ENCODE measurements at regions of chr12 and their contacts with region 1.

Region 1: DNA sequence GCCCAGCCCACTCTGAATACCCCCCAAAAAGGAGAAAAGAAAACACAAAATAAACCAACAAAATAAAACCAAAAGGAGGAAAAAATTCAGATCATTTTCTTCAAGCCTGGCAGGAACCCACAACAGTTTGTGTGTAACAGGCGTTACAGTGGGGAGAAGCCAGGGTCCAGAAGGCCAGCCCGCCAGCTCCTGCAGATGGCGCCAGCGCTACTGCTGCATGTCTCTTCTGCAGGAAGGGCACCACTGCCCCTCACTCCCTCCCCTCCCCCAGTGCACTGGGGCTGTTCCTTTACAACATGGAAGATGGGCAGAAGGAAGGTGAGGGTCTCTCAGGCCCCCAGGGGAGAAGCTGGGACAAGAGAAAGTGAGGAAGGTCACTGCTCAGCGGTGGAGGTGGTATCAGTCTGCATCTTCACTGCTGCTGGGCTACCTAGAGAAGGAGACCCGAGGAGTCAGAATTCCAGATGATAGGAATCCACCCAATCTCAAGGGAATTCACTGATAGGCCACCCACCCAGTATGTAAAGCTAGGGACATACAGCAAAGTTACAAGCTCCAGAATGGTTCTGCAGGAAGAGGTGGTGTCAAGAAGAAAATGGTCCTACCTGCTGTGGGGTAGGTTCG is 2.3 kb upstream of the NOP2 start:
- DNase-seq: peak; percentile 35 to 62
- H3K4me3 ChIP-seq: no peak overlapping the region
- H3K27ac ChIP-seq: no peak overlapping the region
- H3K4me1 ChIP-seq: peaks cover 16% of the 10 kb centered on the region
- H3K27me3 ChIP-seq: no peaks in the 10 kb centered on the region
- CTCF ChIP-seq: peak; percentile 58; the same call in 1 of the 2 replicates

Region 2: GRCh38 chr12:6825398-6826124 is 255.2 kb after region 1 on chr12:
- CTCF ChIA-PET with region 1: no interaction called
- POLR2A ChIA-PET with region 1: no interaction called
- intact Hi-C with region 1: loop called (anchors 5 kb)
- DNase-seq: peak; percentile 68 to 93
- H3K4me3 ChIP-seq: no peak overlapping the region
- H3K27ac ChIP-seq: no peak overlapping the region
- H3K4me1 ChIP-seq: no peaks in the 10 kb centered on the region; the same call in 1 of the 2 replicates
- H3K27me3 ChIP-seq: peaks cover 97% of the 10 kb centered on the region
- CTCF ChIP-seq: peak; percentile 96

Measured in PC-9 (cell line).